Activated T-helper 1 cell treated with anti-CD3 and anti-CD28 coated beads, Interleukin-12 subunit alpha, Interleukin-12 subunit beta, Interleukin-2, Interleukin-4 antibody, amounts not matched to agents 30 ng/mL and 10 ng/mL and 1 ng/mL, durations not matched to agents 14 hours and 24 hours and 36 hours (primary cell): ENCODE measurements at regions of chr16 and their contacts with region 1.

Region 1: GRCh38 chr16:71723537-71724319 is 773 bp downstream of the PHLPP2 start:
- DNase-seq: peak; percentile 72
- H3K4me3 Mint-ChIP-seq: peak overlapping the region; percentile 85
- H3K27ac Mint-ChIP-seq: no peak overlapping the region
- H3K4me1 Mint-ChIP-seq: peaks cover 14% of the 10 kb centered on the region
- H3K27me3 Mint-ChIP-seq: peaks cover 6% of the 10 kb centered on the region

Region 2: GRCh38 chr16:71288890-71289733 is 434.6 kb before region 1 on chr16 and contains the start of gene CMTR2:
- intact Hi-C with region 1: loop called (anchors 5 kb)
- DNase-seq: peak; percentile 89
- H3K4me3 Mint-ChIP-seq: peak within 1 kb of the TSS; percentile 93
- H3K27ac Mint-ChIP-seq: peak within 1 kb of the TSS; percentile 90
- H3K4me1 Mint-ChIP-seq: peaks cover 26% of the 10 kb centered on the region
- H3K27me3 Mint-ChIP-seq: peaks cover 13% of the 10 kb centered on the region
- total RNA-seq, gene CMTR2: 18.2 and 20.7 TPM in 2 replicates

Region 3: GRCh38 chr16:71449020-71449419 is 274.7 kb before region 1 on chr16:
- intact Hi-C with region 1: no loop called
- DNase-seq: no peak
- H3K4me3 Mint-ChIP-seq: no peak overlapping the region
- H3K27ac Mint-ChIP-seq: no peak overlapping the region
- H3K4me1 Mint-ChIP-seq: no peaks in the 10 kb centered on the region
- H3K27me3 Mint-ChIP-seq: no peaks in the 10 kb centered on the region

Region 4: DNA sequence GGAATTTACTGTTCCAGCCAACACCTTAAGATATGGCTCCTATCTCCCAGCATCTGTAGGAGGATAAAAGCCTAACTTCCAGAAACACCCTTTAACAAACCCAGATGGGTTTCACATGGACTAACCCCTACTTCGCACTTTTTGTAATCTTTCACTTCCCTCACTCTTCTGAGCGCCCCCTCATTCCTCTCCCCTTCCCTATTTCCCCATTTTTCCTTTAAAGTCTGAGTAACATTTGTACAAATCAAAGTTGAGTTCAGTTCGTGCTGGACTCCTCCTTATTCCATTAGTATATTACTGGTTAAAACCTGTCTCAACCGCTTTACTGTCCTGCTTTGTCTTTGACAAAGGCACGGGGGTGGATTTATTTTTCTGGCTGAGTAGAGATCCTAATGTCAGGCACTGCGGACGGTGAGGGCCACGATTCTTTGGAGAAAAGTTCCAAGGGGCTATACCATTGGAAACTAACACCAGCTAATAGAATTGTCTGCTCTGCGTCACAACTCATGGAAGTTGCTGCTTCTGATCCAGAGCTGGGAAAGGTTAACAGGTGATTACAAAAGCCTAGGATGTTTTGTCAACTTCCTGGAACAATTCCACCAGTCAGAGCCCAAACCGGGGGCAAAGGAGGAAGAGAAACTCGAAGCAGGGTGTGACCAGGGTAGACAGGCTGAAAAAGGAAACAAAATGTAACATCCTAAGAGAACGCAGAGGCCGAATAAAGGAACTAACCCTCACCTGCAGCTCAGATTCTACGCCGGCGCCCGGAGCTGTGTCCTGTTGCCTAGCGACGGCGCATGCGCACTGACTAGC is 159.4 kb before region 1 on chr16:
- intact Hi-C with region 1: loop called (anchors 2 kb)
- DNase-seq: no peak
- H3K4me3 Mint-ChIP-seq: peak overlapping the region; percentile 85
- H3K27ac Mint-ChIP-seq: peak overlapping the region; percentile 88
- H3K4me1 Mint-ChIP-seq: peaks cover 18% of the 10 kb centered on the region
- H3K27me3 Mint-ChIP-seq: peaks cover 2% of the 10 kb centered on the region

Region 5: DNA sequence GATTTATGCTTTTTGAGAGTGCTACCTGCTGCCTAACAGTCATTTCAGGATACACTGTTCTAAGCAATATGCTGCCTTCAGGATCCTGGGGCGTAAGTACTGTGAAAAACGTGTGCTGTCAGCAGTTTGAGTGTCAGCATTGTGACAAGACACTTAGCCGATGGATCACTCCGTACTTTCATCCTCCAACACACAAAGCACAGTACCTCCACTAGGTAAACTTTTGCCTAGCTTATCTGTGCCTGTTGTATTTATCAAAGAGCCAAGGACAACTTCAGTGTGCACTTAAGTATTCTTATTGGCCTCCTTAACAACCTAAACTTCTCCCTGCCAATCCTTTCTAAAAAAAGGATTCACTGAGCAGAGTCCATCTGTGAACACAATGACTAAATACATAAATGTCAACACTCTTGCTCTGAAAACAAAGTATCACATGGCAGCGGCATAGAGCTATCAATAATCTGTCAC is 34.6 kb after region 1 on chr16:
- intact Hi-C with region 1: no loop called
- DNase-seq: no peak
- H3K4me3 Mint-ChIP-seq: no peak overlapping the region
- H3K27ac Mint-ChIP-seq: no peak overlapping the region
- H3K4me1 Mint-ChIP-seq: peaks cover 7% of the 10 kb centered on the region
- H3K27me3 Mint-ChIP-seq: no peaks in the 10 kb centered on the region

Region 6: DNA sequence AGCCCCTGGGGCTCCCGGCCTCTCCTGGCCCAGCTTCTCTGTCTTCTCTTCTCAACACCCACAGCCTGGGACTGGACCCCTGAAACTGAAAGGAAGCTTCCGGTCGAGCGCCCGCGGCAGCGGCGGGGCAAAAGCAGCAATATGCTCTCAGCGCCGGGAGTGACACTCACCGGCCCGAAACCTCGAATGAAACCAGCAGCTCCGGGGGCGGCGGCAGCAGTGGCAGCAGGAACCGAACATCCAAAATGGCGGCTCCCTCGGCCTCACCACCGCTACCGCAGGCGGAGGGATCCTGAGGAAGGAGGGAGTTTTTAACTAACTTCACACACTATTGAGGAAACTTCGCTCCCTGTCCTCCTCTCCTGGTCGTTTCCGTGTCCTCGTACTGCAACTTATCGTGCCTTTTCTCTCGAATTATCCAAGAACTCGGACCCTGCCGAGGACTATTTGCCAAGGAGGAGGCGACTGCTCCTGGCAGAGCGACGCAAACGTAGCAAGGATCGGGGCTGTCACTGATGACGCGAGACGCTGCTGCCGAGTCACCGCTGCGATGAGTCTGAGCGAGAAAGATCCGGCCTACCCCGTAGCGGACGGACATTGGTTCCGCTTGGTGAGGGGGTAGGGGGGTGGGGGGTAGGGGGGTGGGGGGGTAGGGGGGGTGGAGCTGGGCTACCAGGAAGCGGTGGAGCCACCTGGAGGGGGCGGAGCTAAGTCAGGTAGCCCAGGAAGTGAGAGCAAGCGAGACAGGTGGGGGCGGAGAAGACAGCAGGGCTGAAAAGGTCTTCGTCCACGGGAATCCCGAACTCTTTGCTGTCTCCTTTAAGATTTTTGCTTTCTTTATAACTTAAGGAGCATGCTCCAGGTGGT is 85.1 kb after region 1 on chr16 and contains the start of gene AP1G1:
- intact Hi-C with region 1: loop called (anchors 1 kb)
- DNase-seq: peak; percentile 89
- H3K4me3 Mint-ChIP-seq: peak within 1 kb of the TSS; percentile 96
- H3K27ac Mint-ChIP-seq: peak within 1 kb of the TSS; percentile 100
- H3K4me1 Mint-ChIP-seq: peaks cover 21% of the 10 kb centered on the region
- H3K27me3 Mint-ChIP-seq: no peaks in the 10 kb centered on the region
- total RNA-seq, gene AP1G1: 85.5 and 90.7 TPM in 2 replicates

Region 7: GRCh38 chr16:71883849-71884638 is 160.3 kb after region 1 on chr16 and contains the start of gene ZNF821:
- intact Hi-C with region 1: loop called (anchors 1 kb)
- DNase-seq: peak; percentile 61
- H3K4me3 Mint-ChIP-seq: peak within 1 kb of the TSS; percentile 96
- H3K27ac Mint-ChIP-seq: peak within 1 kb of the TSS; percentile 94
- H3K4me1 Mint-ChIP-seq: peaks cover 54% of the 10 kb centered on the region
- H3K27me3 Mint-ChIP-seq: peaks cover 16% of the 10 kb centered on the region
- total RNA-seq, gene ZNF821: 6.4 and 7.4 TPM in 2 replicates

Region 8: GRCh38 chr16:72008424-72009216 is 284.9 kb after region 1 on chr16 and contains the start of gene DHODH:
- intact Hi-C with region 1: loop called (anchors 1 kb)
- DNase-seq: peak; percentile 98
- H3K4me3 Mint-ChIP-seq: peak within 1 kb of the TSS; percentile 99
- H3K27ac Mint-ChIP-seq: peak within 1 kb of the TSS; percentile 99
- H3K4me1 Mint-ChIP-seq: peaks cover 16% of the 10 kb centered on the region
- H3K27me3 Mint-ChIP-seq: no peaks in the 10 kb centered on the region
- total RNA-seq, gene DHODH: 31.0 and 33.1 TPM in 2 replicates

Region 9: DNA sequence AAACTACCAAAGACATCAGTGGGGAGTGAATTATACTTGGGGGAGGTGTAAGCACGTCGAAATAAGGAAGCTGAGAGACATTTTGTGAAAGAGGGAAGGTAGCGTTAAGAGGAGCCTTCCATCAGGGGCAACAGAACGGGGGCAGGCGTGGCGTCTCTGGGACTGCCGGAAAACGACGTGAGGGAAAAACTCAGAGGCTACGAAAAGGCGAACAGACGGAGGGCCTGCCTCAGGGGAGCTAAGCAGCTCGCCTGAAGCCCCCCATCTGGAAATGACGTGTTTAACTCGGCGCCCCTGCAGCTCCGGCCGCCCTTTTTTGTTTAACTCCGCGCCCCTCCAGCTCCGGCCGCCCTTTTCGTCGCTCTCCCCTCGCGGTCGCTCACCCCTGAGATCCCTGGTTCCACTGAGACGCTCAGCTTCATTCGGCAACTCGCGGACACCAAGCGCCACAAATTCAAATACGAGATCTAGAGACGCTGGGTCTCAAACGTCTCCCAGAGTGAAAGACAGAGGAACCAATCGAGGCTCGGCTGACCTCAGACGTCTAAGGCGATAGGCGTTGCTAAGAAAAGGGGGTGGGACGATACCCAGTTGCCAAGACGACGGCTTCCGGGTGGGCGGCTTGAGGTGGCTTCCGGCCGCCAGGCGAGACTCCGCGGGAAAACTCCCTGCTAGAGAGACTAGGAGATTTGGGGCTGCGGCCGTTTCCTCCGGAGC is 940.9 kb after region 1 on chr16:
- intact Hi-C with region 1: loop called (anchors 10 kb)
- DNase-seq: peak; percentile 91
- H3K4me3 Mint-ChIP-seq: peak overlapping the region; percentile 99
- H3K27ac Mint-ChIP-seq: peak overlapping the region; percentile 96
- H3K4me1 Mint-ChIP-seq: peaks cover 38% of the 10 kb centered on the region
- H3K27me3 Mint-ChIP-seq: peaks cover 3% of the 10 kb centered on the region